Activated T-helper 1 cell treated with anti-CD3 and anti-CD28 coated beads, Interleukin-12 subunit alpha, Interleukin-12 subunit beta, Interleukin-2, Interleukin-4 antibody, amounts not matched to agents 30 ng/mL and 10 ng/mL and 1 ng/mL, durations not matched to agents 14 hours and 24 hours and 36 hours (primary cell): ENCODE measurements at regions of chr7 and their contacts with region 1.

Region 1: GRCh38 chr7:105808703-105809590 is 67.5 kb downstream of the ATXN7L1 start:
- DNase-seq: peak; percentile 77
- H3K4me3 Mint-ChIP-seq: peak overlapping the region; percentile 45
- H3K27ac Mint-ChIP-seq: peak overlapping the region; percentile 75
- H3K4me1 Mint-ChIP-seq: peaks cover 77% of the 10 kb centered on the region
- H3K27me3 Mint-ChIP-seq: peaks cover 1% of the 10 kb centered on the region

Region 2: DNA sequence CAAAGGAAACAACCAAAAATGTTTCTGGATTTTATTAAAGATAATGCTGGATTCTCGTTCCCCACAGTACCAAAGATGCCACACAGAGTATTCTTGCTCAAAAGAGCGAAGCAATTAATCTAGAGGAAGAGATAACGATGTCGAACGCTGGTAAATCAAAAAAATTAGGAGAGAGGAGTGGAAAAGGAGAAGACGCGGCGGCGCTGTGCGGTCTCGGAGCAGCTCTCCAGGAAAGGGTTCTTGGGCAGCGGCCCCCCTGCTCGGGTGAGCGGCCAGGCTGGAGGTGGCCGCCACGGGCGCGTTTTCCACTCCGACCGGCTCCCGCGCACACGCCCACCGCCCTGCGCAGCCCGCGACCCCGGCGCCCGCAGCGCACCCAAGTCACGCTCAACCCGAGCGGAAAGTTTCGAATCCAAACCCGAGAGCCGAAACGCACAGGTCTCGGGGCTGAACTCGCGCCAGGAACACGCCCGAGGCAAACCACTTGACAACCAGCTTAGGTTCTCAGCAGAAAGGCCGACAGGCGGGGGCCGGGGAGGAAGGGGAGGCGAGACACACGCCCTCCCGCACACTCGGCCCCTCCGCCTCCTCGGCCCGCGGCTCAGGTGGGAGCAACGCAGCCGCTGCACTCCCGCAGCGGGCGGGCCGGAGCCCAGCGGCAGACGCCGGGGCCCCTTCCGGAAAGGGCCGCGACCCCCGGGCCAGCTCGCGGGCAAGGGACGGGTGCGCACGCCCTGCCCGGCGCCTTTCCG is 421.1 kb before region 1 on chr7:
- intact Hi-C with region 1: loop called (anchors 5 kb)
- DNase-seq: peak; percentile 37
- H3K4me3 Mint-ChIP-seq: peak overlapping the region; percentile 95
- H3K27ac Mint-ChIP-seq: peak overlapping the region; percentile 63
- H3K4me1 Mint-ChIP-seq: peaks cover 29% of the 10 kb centered on the region
- H3K27me3 Mint-ChIP-seq: peaks cover 4% of the 10 kb centered on the region

Region 3: GRCh38 chr7:105782391-105783042 is 26.4 kb before region 1 on chr7:
- intact Hi-C with region 1: loop called (anchors 1 kb)
- DNase-seq: no peak
- H3K4me3 Mint-ChIP-seq: no peak overlapping the region
- H3K27ac Mint-ChIP-seq: no peak overlapping the region
- H3K4me1 Mint-ChIP-seq: peaks cover 11% of the 10 kb centered on the region
- H3K27me3 Mint-ChIP-seq: peaks cover 47% of the 10 kb centered on the region

Region 4: GRCh38 chr7:106009403-106010226 is 200.7 kb after region 1 on chr7:
- intact Hi-C with region 1: loop called (anchors 1 kb)
- DNase-seq: peak; percentile 72
- H3K4me3 Mint-ChIP-seq: no peak overlapping the region
- H3K27ac Mint-ChIP-seq: peak overlapping the region; percentile 32
- H3K4me1 Mint-ChIP-seq: peaks cover 15% of the 10 kb centered on the region
- H3K27me3 Mint-ChIP-seq: peaks cover 33% of the 10 kb centered on the region

Region 5: DNA sequence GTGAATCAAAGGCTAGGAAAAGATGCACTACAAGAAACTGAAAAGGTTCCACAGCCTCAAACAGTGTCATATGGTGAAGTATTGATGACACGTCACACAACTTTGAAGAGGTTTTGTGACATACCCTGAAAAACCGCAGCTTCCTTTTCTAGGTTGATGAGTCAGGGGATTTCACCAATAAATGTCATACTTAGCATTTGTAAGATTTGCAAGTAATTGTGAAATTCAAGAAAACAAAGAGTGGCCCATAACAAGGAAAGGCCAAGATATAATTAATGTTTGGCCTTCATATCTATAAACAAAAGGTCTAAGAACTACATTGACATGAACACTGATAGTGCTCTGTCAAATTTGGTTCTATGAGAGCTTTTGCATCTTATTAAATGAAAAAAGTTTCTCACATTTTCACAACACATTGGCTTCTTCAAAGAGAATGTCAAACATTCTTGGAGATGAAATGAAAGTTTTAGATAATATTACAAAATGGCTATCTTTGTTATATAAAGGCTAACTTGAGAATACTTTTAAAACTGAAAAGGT is 537.8 kb after region 1 on chr7:
- intact Hi-C with region 1: loop called (anchors 1 kb)
- DNase-seq: peak; percentile 76
- H3K4me3 Mint-ChIP-seq: peak overlapping the region; percentile 63
- H3K27ac Mint-ChIP-seq: peak overlapping the region; percentile 99
- H3K4me1 Mint-ChIP-seq: peaks cover 53% of the 10 kb centered on the region
- H3K27me3 Mint-ChIP-seq: peaks cover 1% of the 10 kb centered on the region

Region 6: DNA sequence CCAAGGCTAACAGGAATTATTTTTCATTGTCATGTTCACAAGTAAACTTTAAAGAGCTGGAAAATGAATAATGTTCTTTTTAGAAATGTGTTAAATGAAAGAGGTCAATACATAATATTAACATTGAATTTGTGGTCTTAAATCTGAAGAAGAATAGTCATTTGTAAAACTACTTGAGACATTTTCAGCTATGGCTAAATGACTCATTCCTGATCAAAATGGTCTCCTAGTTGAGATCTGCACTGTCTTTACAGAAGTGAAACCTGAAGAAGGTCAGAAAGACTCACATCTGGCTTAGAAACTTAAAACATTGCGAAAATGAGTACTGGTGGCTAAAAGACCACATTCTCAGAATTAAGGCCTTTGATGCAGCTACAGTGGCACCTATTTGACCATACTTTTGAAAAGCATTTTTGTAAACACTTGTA is 1062.0 kb after region 1 on chr7:
- intact Hi-C with region 1: loop called (anchors 1 kb)
- DNase-seq: no peak
- H3K4me3 Mint-ChIP-seq: peak overlapping the region; percentile 43
- H3K27ac Mint-ChIP-seq: peak overlapping the region; percentile 64
- H3K4me1 Mint-ChIP-seq: peaks cover 75% of the 10 kb centered on the region
- H3K27me3 Mint-ChIP-seq: no peaks in the 10 kb centered on the region